ENCODE measurements at regions of chr1 and their contacts with region 1.

Region 1: GRCh38 chr1:222465211-222466041 is 82.5 kb downstream of the HHIPL2 start:
- DNase-seq: peak; percentile 95 to 97 (median 96)
- ATAC-seq: peak; percentile 99
- H3K4me3 ChIP-seq: peak overlapping the region; percentile 55
- H3K27ac ChIP-seq: peak overlapping the region; percentile 92
- H3K4me1 ChIP-seq: peaks cover 10 to 21% of the 10 kb centered on the region in 2 experiments
- H3K27me3 ChIP-seq: no peaks in the 10 kb centered on the region
- CTCF ChIP-seq: peak; percentile 98 to 99 (median 98)
- EP300 ChIP-seq: peak; percentile 32
- POLR2A ChIP-seq: peak; percentile 80
- RAD21 ChIP-seq: peak; percentile 99 to 100

Region 2: DNA sequence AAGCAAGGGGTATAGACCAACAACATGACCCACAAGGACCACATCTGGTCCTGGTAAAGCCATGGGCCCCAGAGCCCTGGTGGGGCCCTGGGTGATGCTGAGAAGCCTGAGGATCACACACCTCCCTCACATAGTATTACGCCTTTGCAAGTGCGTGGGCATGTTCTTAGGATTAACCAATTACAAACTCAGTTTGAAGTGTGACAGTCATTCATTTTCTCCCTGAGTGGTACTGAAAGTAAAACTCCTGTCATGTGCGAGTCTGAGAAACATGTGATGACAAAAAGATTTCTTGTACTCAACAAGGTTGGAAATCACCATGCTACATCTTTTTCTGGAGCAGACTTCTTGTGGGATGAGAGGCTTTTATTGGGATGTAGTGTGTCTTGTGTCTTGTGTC is 408.3 kb before region 1 on chr1:
- CTCF ChIA-PET with region 1: no interaction called
- POLR2A ChIA-PET with region 1: no interaction called
- in situ Hi-C with region 1: no loop called
- intact Hi-C with region 1: no loop called
- DNase-seq: no peak
- ATAC-seq: no peak
- H3K4me3 ChIP-seq: no peak overlapping the region
- H3K27ac ChIP-seq: no peak overlapping the region
- H3K4me1 ChIP-seq: no peaks in the 10 kb centered on the region
- H3K27me3 ChIP-seq: peaks cover 0 to 21% of the 10 kb centered on the region in 2 experiments; a peak in 3 of 5 replicates
- CTCF ChIP-seq: no peak
- EP300 ChIP-seq: no peak
- POLR2A ChIP-seq: no peak
- RAD21 ChIP-seq: no peak

Region 3: DNA sequence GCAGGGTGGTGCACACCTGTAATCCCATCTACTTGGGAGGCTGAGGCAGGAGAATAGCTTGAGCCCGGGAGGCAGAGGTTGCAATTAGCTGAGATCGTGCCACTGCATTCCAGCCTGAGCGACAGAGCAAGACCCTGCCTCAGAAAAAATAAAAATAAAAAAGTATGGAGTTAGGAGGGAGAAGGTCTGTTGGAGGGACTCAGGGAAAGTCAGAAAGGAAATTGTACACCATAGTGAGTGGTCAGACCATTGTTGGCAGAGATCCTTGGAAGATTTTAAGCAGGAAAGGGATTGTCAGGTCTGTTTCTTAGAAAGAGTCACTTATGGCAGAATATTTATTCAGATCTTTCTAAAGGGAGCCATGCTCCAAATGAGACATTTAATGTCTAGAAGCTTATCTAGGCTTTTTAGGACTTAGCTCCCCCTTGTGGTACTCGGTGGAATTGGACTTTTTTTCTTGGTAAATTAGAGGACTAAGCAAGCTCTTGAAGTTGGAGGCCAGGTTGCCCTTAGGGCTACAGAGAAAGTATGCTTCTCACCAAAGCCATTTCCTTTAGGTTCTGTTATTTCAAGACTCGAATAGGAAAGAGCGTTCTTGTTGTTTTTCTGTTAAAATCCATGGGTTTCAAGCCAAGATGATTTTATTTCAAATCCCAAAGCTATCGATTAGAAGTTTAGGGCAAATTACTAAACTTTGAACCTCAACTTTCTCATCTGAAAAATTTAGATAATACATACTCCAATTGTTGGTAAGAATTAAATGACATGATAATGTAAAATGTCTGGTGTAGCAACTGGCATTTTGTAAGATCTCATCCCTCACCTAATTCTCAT is 169.0 kb after region 1 on chr1:
- CTCF ChIA-PET with region 1: interaction called, 38 read pairs
- POLR2A ChIA-PET with region 1: interaction called, 8 read pairs
- in situ Hi-C with region 1: loop called (anchors 5 kb)
- intact Hi-C with region 1: loop called (anchors 1 kb)
- DNase-seq: peak; percentile 62 to 91 (median 68)
- ATAC-seq: peak; percentile 93
- H3K4me3 ChIP-seq: no peak overlapping the region
- H3K27ac ChIP-seq: no peak overlapping the region
- H3K4me1 ChIP-seq: no peaks in the 10 kb centered on the region
- H3K27me3 ChIP-seq: no peaks in the 10 kb centered on the region
- CTCF ChIP-seq: peak; percentile 65 to 95 (median 88)
- EP300 ChIP-seq: no peak
- POLR2A ChIP-seq: no peak
- RAD21 ChIP-seq: peak; percentile 90 to 91

Region 4: GRCh38 chr1:222643938-222644635 is 178.7 kb after region 1 on chr1:
- CTCF ChIA-PET with region 1: interaction called, 3 read pairs
- POLR2A ChIA-PET with region 1: interaction called, 4 read pairs
- in situ Hi-C with region 1: no loop called
- intact Hi-C with region 1: loop called (anchors 2 kb)
- DNase-seq: peak; percentile 95 to 100 (median 96)
- ATAC-seq: peak; percentile 97
- H3K4me3 ChIP-seq: peak overlapping the region; percentile 88
- H3K27ac ChIP-seq: peak overlapping the region; percentile 88
- H3K4me1 ChIP-seq: no peaks in the 10 kb centered on the region; a peak in 2 of 5 replicates
- H3K27me3 ChIP-seq: no peaks in the 10 kb centered on the region
- CTCF ChIP-seq: no peak; a peak in 1 of 6 replicates
- EP300 ChIP-seq: peak; percentile 49
- POLR2A ChIP-seq: peak; percentile 98
- RAD21 ChIP-seq: no peak

Region 5: GRCh38 chr1:222702210-222702609 is 236.8 kb after region 1 on chr1:
- CTCF ChIA-PET with region 1: no interaction called
- POLR2A ChIA-PET with region 1: no interaction called
- in situ Hi-C with region 1: no loop called
- intact Hi-C with region 1: no loop called
- DNase-seq: no peak
- ATAC-seq: no peak
- H3K4me3 ChIP-seq: no peak overlapping the region
- H3K27ac ChIP-seq: no peak overlapping the region
- H3K4me1 ChIP-seq: no peaks in the 10 kb centered on the region
- H3K27me3 ChIP-seq: no peaks in the 10 kb centered on the region
- CTCF ChIP-seq: no peak
- EP300 ChIP-seq: no peak
- POLR2A ChIP-seq: no peak
- RAD21 ChIP-seq: no peak

Region 6: DNA sequence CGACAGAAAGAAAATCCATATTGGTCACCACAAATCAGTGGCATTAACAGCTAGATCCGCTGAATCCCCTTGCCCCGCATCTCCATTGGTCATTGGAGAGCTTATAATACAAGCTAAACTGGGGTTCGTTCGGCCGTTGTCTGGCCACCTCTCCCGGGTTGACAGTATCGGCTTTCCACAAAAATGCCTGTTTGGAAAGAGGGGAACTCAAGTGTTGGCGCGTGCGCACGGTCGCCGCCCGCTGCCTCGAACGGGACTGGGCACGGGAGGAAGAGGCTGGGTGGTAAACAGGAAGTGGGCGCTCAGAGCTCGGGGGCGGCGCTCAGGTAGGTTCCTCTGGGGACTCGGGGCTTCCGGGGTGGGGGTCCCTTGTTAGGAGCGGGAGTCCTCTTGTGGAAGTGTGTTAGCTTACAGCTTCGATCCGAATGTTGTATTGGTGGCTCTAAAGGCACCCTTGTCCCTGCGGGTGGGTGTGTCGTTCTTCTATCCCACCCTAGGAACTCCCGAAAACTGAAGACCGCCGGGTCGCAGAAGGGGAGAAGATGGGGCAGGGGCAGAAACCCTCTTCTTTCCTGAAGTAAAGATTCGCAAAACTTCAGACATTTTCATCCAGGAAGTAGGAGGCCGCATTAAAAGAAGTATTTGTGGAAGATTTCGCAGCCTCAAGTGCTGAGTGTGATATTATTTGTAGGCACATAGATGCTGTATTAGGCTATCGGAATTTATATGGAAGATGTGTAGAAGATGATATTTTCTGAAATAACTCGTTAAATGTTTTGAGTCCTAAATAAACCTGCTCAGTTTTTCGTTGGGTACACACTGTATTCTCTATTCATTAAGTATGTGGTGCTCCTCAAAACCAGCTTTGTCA is 247.9 kb after region 1 on chr1:
- CTCF ChIA-PET with region 1: no interaction called
- POLR2A ChIA-PET with region 1: no interaction called
- in situ Hi-C with region 1: loop called (anchors 10 kb)
- intact Hi-C with region 1: loop called (anchors 1 kb)
- DNase-seq: peak; percentile 85 to 98 (median 88)
- ATAC-seq: peak; percentile 76
- H3K4me3 ChIP-seq: peak overlapping the region; percentile 71
- H3K27ac ChIP-seq: peak overlapping the region; percentile 98
- H3K4me1 ChIP-seq: peaks cover 19% of the 10 kb centered on the region in 2 experiments; a peak in 4 of 5 replicates
- H3K27me3 ChIP-seq: no peaks in the 10 kb centered on the region
- CTCF ChIP-seq: peak in 2 of 3 experiments; percentile 14 to 22; a peak in 2 of 6 replicates
- EP300 ChIP-seq: peak; percentile 36
- POLR2A ChIP-seq: peak; percentile 86
- RAD21 ChIP-seq: no peak

Region 7: GRCh38 chr1:222769181-222769580 is 303.8 kb after region 1 on chr1:
- CTCF ChIA-PET with region 1: no interaction called
- POLR2A ChIA-PET with region 1: no interaction called
- in situ Hi-C with region 1: no loop called
- intact Hi-C with region 1: loop called (anchors 2 kb)
- DNase-seq: peak in 3 of 4 experiments; percentile 32 to 35 (median 33)
- ATAC-seq: peak; percentile 36; the same call in 1 of the 3 replicates
- H3K4me3 ChIP-seq: no peak overlapping the region
- H3K27ac ChIP-seq: no peak overlapping the region
- H3K4me1 ChIP-seq: no peaks in the 10 kb centered on the region
- H3K27me3 ChIP-seq: no peaks in the 10 kb centered on the region
- CTCF ChIP-seq: peak; percentile 37 to 47 (median 38); a peak in 5 of 6 replicates
- EP300 ChIP-seq: no peak
- POLR2A ChIP-seq: no peak
- RAD21 ChIP-seq: peak in 1 of 2 experiments; percentile 43; a peak in 1 of 4 replicates

Measured in K562 (cell line).